ENCODE measurements at regions of chr6 and their contacts with region 1.

Region 1: GRCh38 chr6:83057705-83058321 is 7.8 kb downstream of the UBE3D start:
- DNase-seq: peak; percentile 38
- H3K4me3 ChIP-seq: no peak overlapping the region
- H3K27ac ChIP-seq: no peak overlapping the region
- H3K4me1 ChIP-seq: no peaks in the 10 kb centered on the region
- H3K27me3 ChIP-seq: no peaks in the 10 kb centered on the region
- CTCF ChIP-seq: peak; percentile 62

Region 2: GRCh38 chr6:82270881-82271645 is 786.8 kb before region 1 on chr6:
- intact Hi-C with region 1: loop called (anchors 2 kb)
- DNase-seq: no peak
- H3K4me3 ChIP-seq: no peak overlapping the region
- H3K27ac ChIP-seq: no peak overlapping the region
- H3K4me1 ChIP-seq: no peaks in the 10 kb centered on the region
- H3K27me3 ChIP-seq: no peaks in the 10 kb centered on the region
- CTCF ChIP-seq: peak; percentile 65

Region 3: GRCh38 chr6:82363351-82364086 is 694.3 kb before region 1 on chr6 and contains the start of gene TPBG:
- intact Hi-C with region 1: loop called (anchors 10 kb)
- DNase-seq: peak; percentile 74
- H3K4me3 ChIP-seq: peak within 1 kb of the TSS; percentile 73
- H3K27ac ChIP-seq: peak within 1 kb of the TSS; percentile 87
- H3K4me1 ChIP-seq: no peaks in the 10 kb centered on the region
- H3K27me3 ChIP-seq: peaks cover 7% of the 10 kb centered on the region
- CTCF ChIP-seq: no peak
- total RNA-seq, gene TPBG: 16.3 to 16.9 TPM

Region 4: GRCh38 chr6:83270971-83271719 is 213.3 kb after region 1 on chr6:
- intact Hi-C with region 1: no loop called
- DNase-seq: no peak
- H3K4me3 ChIP-seq: no peak overlapping the region
- H3K27ac ChIP-seq: no peak overlapping the region
- H3K4me1 ChIP-seq: no peaks in the 10 kb centered on the region
- H3K27me3 ChIP-seq: no peaks in the 10 kb centered on the region
- CTCF ChIP-seq: no peak